Vagina (tissue), 2 donors: ENCODE measurements at regions of chr20 and their contacts with region 1.

Region 1: GRCh38 chr20:54199721-54200176 is 8.1 kb upstream of the PFDN4 start:
- DNase-seq: peak in 1 of 2 donors; percentile 88
- H3K4me3 ChIP-seq: no peak overlapping the region
- H3K27ac ChIP-seq: no peak overlapping the region
- H3K4me1 ChIP-seq: no peaks in the 10 kb centered on the region
- H3K27me3 ChIP-seq: no peaks in the 10 kb centered on the region
- CTCF ChIP-seq: peak; percentile 60 to 85 (median 82)
- POLR2A ChIP-seq: no peak

Region 2: GRCh38 chr20:54103067-54103761 is 96.5 kb before region 1 on chr20:
- intact Hi-C with region 1: loop called (anchors 10 kb)
- DNase-seq: no peak
- H3K4me3 ChIP-seq: no peak overlapping the region
- H3K27ac ChIP-seq: no peak overlapping the region
- H3K4me1 ChIP-seq: no peaks in the 10 kb centered on the region
- H3K27me3 ChIP-seq: no peaks in the 10 kb centered on the region
- CTCF ChIP-seq: peak in 2 of 3 experiments; percentile 26 to 61
- POLR2A ChIP-seq: no peak

Region 3: DNA sequence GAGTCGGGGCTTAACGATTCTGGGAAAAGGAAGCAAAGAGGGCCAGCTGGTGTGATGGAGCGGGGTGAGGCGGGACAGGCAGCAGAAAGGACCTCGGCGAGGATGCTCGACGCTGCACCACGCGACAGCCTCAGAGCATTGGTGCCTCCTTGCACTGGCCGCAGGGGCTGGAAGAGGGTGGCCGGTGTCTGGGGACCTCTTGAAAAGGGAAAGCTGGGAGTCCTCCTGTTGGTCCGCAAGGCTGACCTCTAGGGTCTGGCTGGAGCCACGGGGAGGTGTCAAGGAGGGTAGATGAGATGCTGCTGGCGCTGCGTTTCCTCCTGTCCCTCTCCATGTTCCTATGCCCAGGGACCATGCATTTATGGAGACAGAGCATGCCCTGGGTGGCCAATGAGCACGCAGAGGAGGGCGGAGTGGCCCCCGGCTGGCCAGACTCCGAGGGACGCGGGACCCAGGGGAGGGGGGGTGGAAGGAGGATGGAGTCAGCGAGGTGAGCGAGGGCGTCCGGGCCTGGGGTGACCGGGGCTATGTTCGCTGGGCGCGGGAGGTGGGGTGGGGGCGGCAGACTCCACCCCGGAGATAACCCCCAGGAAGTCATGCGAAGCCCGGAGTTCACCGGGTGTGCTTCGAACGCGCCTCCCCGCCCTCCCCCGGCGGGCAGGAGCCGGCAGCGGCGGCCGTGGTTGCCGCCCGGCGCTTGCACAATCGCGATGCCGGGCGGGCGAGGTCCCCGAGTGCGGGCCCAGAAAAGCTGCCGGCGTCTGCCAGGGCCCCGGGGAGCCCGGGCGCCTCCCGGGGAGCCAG is 25.9 kb before region 1 on chr20 and contains the start of gene CYP24A1:
- intact Hi-C with region 1: no loop called
- DNase-seq: no peak
- H3K4me3 ChIP-seq: peak within 1 kb of the TSS; percentile 22 to 33
- H3K27ac ChIP-seq: no peak within 1 kb of the TSS
- H3K4me1 ChIP-seq: peaks cover 26% of the 10 kb centered on the region
- H3K27me3 ChIP-seq: no peaks in the 10 kb centered on the region
- CTCF ChIP-seq: no peak
- POLR2A ChIP-seq: no peak
- total RNA-seq, gene CYP24A1: 5.9 TPM